ENCODE measurements at regions of chr13 and their contacts with region 1.

Region 1: DNA sequence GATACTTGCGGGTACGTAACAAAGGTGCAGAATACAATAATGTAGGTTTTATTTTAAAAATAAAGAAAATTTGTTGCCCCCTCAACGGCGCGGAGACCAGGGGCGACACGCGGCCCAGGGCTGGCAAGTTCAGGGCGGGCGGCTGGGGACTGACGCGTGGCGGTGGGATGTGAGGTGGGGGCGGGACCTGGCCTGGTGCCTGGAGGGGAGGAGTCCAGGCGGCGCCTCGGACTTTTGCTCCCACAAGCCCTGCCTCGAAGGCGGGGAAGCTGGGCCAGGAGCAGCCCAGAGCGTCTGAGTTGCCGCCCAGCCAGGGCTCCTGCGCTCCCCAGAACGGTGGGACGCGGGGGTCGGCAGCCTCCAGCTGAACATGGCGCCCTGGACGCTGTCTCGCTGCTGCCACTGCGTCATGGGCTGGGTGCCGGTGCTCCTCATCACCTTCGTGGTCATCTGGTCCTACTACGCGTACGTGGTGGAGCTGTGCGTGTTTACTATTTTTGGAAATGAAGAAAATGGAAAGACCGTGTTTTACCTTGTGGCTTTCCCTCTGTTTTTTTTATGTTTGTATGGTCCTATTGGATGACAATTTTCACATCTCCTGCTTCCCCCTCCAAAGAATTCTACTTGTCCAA is 1122.8 kb upstream of the ATXN8OS start:
- DNase-seq: no peak
- H3K4me3 ChIP-seq: no peak overlapping the region
- CTCF ChIP-seq: no peak

Region 2: DNA sequence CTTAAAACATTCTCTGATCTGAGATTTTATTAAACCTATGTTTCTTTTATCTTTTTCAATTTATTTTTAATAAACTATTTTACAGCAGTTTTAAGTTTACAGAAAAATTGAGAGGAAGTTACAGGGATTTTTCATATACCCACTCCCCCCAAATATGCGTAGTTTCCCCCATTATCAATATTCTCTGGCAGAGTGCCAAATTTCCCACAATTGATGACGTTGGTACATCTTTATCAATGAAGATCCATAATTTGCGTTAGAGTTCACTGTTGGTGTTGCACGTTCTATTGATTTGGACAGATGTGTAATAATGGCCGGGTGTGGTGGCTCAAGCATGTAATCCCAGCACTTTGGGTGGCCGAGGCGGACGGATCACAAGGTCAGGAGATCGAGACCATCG is 59.8 kb after region 1 on chr13:
- in situ Hi-C with region 1: loop called (anchors 5 kb)
- DNase-seq: no peak
- H3K4me3 ChIP-seq: no peak overlapping the region
- CTCF ChIP-seq: no peak

Measured in astrocyte of the cerebellum (primary cell).